GM13977 (cell line): ENCODE measurements at regions of chr9 and their contacts with region 1.

Region 1: GRCh38 chr9:27033823-27034403 is 28.4 kb upstream of the LRRC19 start:
- DNase-seq: peak; percentile 48
- CTCF ChIP-seq: peak; percentile 63

Region 2: GRCh38 chr9:26437056-26437711 is 596.7 kb before region 1 on chr9:
- in situ Hi-C with region 1: no loop called
- DNase-seq: no peak
- CTCF ChIP-seq: no peak

Region 3: DNA sequence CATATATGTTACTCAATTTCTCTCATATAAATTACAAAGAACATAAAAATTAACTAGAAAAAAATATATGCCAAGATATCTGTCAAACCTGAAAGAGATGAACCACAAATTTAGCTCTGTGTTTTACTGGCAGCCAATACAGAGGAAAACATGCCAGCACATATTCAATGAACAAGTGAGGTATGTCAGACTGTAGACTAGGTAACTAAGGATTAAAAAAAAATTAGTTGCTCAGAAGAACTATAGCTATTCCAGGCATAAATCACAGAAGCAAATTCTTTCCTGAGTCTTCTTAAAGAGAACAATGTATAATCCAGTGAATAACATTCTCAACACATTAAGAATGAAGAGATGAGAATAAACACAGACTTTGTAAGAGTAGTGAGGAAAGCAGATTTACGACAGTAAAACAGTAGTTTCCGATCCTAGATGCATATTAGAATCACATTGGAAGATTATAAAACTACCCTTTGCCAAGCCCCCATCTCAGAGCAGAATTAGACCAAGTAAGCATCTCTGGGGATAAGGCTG is 120.7 kb before region 1 on chr9:
- in situ Hi-C with region 1: no loop called
- DNase-seq: no peak
- CTCF ChIP-seq: no peak

Region 4: GRCh38 chr9:27276193-27277030 is 242.5 kb after region 1 on chr9:
- in situ Hi-C with region 1: loop called (anchors 25 kb)
- DNase-seq: peak; percentile 56
- CTCF ChIP-seq: peak; percentile 72